GM12878 (cell line): ENCODE measurements at regions of chr18 and their contacts with region 1.

Region 1: GRCh38 chr18:7645756-7646155 is 78.6 kb downstream of the PTPRM start:
- DNase-seq: no peak
- ATAC-seq: no peak
- H3K4me3 ChIP-seq: no peak overlapping the region
- H3K27ac ChIP-seq: no peak overlapping the region
- H3K4me1 ChIP-seq: no peaks in the 10 kb centered on the region
- H3K27me3 ChIP-seq: no peaks in the 10 kb centered on the region
- CTCF ChIP-seq: no peak
- EP300 ChIP-seq: no peak
- POLR2A ChIP-seq: no peak
- RAD21 ChIP-seq: no peak

Region 2: DNA sequence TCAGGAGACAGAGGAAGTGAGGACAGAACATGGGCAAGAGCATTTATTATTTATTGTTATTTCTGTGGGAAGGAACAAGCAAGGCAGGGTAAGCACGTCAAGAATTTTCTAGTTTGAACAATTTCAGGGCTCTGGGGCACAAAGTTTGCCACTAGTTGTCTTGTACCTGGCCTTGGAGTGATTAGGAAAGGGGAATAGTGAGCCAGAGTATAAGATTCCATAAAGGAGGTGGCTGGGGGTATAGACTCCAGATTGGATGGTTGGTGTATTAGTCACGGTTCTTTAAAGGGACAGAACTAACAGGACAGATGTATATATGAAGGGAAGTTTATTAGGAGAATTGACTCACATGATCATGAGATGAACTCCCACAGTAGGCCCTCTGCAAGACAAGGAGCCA is 110.4 kb before region 1 on chr18:
- CTCF ChIA-PET with region 1: no interaction called
- POLR2A ChIA-PET with region 1: no interaction called
- RAD21 ChIA-PET with region 1: no interaction called
- SMC1A ChIA-PET with region 1: no interaction called
- in situ Hi-C with region 1: no loop called
- intact Hi-C with region 1: no loop called
- DNase-seq: no peak
- ATAC-seq: no peak
- H3K4me3 ChIP-seq: no peak overlapping the region
- H3K27ac ChIP-seq: no peak overlapping the region
- H3K4me1 ChIP-seq: no peaks in the 10 kb centered on the region
- H3K27me3 ChIP-seq: no peaks in the 10 kb centered on the region
- CTCF ChIP-seq: no peak
- EP300 ChIP-seq: no peak
- POLR2A ChIP-seq: no peak
- RAD21 ChIP-seq: no peak

Region 3: DNA sequence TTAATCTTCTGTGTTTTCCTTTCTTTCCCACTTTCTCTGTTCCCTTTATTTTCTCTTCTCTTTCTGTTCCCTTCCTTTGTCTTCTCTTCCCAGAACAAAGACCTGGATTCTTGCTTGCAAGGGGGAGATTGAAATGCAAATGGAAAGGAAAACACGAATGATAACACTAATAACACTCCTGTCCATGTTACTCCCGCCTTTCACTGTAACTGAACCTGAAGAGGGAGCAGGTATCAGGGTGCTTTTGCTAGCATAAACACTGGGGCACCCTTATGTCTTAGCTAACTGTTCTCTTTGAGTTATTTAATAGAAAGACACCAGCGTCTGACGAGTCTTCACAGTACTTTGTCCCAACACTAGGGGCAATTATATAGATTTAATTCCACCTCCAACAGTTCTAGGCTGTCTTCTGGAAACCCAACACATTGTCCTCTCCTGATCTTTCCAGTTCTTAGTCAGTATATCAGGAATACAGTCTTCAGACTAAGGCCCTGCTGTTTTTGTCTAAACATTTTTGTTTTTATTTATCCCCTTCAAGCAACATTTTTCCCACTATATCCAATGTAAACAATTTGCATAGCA is 20.5 kb after region 1 on chr18:
- CTCF ChIA-PET with region 1: no interaction called
- POLR2A ChIA-PET with region 1: no interaction called
- RAD21 ChIA-PET with region 1: no interaction called
- SMC1A ChIA-PET with region 1: no interaction called
- in situ Hi-C with region 1: no loop called
- intact Hi-C with region 1: loop called (anchors 1 kb)
- DNase-seq: no peak
- ATAC-seq: no peak; the same call in 2 of the 3 replicates
- H3K4me3 ChIP-seq: no peak overlapping the region
- H3K27ac ChIP-seq: no peak overlapping the region
- H3K4me1 ChIP-seq: no peaks in the 10 kb centered on the region
- H3K27me3 ChIP-seq: no peaks in the 10 kb centered on the region
- CTCF ChIP-seq: no peak
- EP300 ChIP-seq: no peak
- POLR2A ChIP-seq: no peak
- RAD21 ChIP-seq: no peak

Region 4: GRCh38 chr18:7749510-7749981 is 103.8 kb after region 1 on chr18:
- CTCF ChIA-PET with region 1: no interaction called
- POLR2A ChIA-PET with region 1: no interaction called
- RAD21 ChIA-PET with region 1: no interaction called
- SMC1A ChIA-PET with region 1: no interaction called
- in situ Hi-C with region 1: no loop called
- intact Hi-C with region 1: no loop called
- DNase-seq: no peak
- ATAC-seq: no peak
- H3K4me3 ChIP-seq: no peak overlapping the region
- H3K27ac ChIP-seq: no peak overlapping the region
- H3K4me1 ChIP-seq: no peaks in the 10 kb centered on the region
- H3K27me3 ChIP-seq: no peaks in the 10 kb centered on the region; a peak in 1 of 4 replicates
- CTCF ChIP-seq: no peak
- EP300 ChIP-seq: no peak
- POLR2A ChIP-seq: no peak
- RAD21 ChIP-seq: no peak

Region 5: DNA sequence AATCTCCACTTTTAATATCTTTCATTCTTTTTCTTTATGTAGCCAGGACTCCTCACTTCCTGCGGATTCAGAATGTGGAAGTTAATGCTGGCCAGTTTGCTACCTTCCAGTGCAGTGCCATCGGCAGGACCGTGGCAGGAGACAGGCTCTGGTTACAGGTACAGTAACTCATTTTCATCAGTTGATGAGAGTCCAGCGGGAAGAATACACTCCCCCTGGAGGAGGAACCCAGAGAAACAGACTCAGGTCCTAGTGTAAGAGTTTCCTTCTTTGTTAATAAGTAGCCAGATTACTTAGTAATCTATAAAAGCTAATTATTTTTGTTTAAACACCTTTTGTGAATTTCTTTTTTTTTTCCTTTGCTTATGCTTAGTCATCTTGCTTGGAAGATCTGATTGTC is 280.8 kb after region 1 on chr18:
- CTCF ChIA-PET with region 1: no interaction called
- POLR2A ChIA-PET with region 1: no interaction called
- RAD21 ChIA-PET with region 1: no interaction called
- SMC1A ChIA-PET with region 1: no interaction called
- in situ Hi-C with region 1: no loop called
- intact Hi-C with region 1: no loop called
- DNase-seq: no peak
- ATAC-seq: no peak
- H3K4me3 ChIP-seq: no peak overlapping the region
- H3K27ac ChIP-seq: no peak overlapping the region
- H3K4me1 ChIP-seq: no peaks in the 10 kb centered on the region
- H3K27me3 ChIP-seq: no peaks in the 10 kb centered on the region
- CTCF ChIP-seq: no peak
- EP300 ChIP-seq: no peak
- POLR2A ChIP-seq: no peak
- RAD21 ChIP-seq: no peak

Region 6: GRCh38 chr18:8254654-8255053 is 608.9 kb after region 1 on chr18:
- CTCF ChIA-PET with region 1: no interaction called
- POLR2A ChIA-PET with region 1: no interaction called
- RAD21 ChIA-PET with region 1: no interaction called
- SMC1A ChIA-PET with region 1: no interaction called
- in situ Hi-C with region 1: no loop called
- intact Hi-C with region 1: no loop called
- DNase-seq: no peak
- ATAC-seq: no peak
- H3K4me3 ChIP-seq: no peak overlapping the region
- H3K27ac ChIP-seq: no peak overlapping the region
- H3K4me1 ChIP-seq: no peaks in the 10 kb centered on the region
- H3K27me3 ChIP-seq: peaks cover 0 to 2% of the 10 kb centered on the region in 2 experiments; a peak in 2 of 4 replicates
- CTCF ChIP-seq: no peak
- EP300 ChIP-seq: no peak
- POLR2A ChIP-seq: no peak
- RAD21 ChIP-seq: no peak